CD8-positive, alpha-beta T cell (primary cell): ENCODE measurements at regions of chr2 and their contacts with region 1.

Region 1: GRCh38 chr2:207625018-207625907 is at the start of gene METTL21A:
- DNase-seq: peak; percentile 88 to 99 (median 95)
- ATAC-seq: peak; percentile 82
- H3K4me3 ChIP-seq: peak within 1 kb of the TSS; percentile 91 to 97
- H3K4me3 Mint-ChIP-seq: peak within 1 kb of the TSS; percentile 96
- H3K27ac ChIP-seq: peak within 1 kb of the TSS; percentile 95 to 97
- H3K27ac Mint-ChIP-seq: peak within 1 kb of the TSS; percentile 96
- H3K4me1 ChIP-seq: peaks cover 18% of the 10 kb centered on the region
- H3K4me1 Mint-ChIP-seq: peaks cover 43% of the 10 kb centered on the region
- H3K27me3 ChIP-seq: no peaks in the 10 kb centered on the region
- H3K27me3 Mint-ChIP-seq: no peaks in the 10 kb centered on the region
- CTCF ChIP-seq: peak; percentile 49
- total RNA-seq, gene METTL21A: 12.3 to 12.4 TPM

Region 2: DNA sequence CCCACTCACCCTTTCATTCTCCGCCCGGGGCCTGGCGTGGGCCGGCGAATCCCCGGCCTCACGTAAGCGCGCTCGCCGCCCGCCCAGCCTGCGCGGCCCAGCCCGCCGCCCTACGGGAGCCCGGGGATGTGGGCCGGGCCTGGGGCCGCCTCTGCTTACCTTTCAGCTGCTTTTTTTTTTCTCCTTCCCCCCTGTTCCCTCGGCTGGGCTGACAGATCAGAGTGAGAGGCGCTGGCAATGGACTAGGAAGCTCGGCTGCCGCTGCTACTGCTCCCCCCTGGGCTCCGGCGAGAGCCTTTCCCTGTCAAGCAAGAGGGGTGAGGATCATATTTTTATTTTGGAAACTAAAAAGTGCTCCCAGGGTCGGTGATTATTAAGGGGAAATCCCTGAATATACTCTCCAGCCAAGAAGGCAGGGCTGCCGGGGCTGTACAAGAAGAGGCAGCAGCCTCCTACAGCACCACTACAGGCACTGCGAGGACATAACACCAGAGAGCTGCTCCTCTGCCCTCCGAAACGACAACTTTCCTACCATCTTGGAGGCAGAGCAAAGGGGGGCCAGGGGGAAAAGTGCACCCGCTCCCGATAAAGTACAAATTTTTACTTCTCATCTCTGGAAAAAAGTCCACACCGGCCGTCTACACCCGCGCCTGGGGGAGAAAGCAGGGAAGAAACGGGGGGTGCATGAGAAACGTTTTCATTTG is 1539.4 kb before region 1 on chr2 and contains the start of gene INO80D:
- CTCF ChIA-PET with region 1: no interaction called
- POLR2A ChIA-PET with region 1: no interaction called
- intact Hi-C with region 1: loop called in 1 of 2 experiments (anchors 10 kb)
- DNase-seq: peak; percentile 63 to 93 (median 76)
- ATAC-seq: peak; percentile 91
- H3K4me3 ChIP-seq: peak within 1 kb of the TSS; percentile 85 to 88
- H3K4me3 Mint-ChIP-seq: peak within 1 kb of the TSS; percentile 100
- H3K27ac ChIP-seq: peak within 1 kb of the TSS; percentile 92 to 98
- H3K27ac Mint-ChIP-seq: peak within 1 kb of the TSS; percentile 100
- H3K4me1 ChIP-seq: peaks cover 32% of the 10 kb centered on the region
- H3K4me1 Mint-ChIP-seq: peaks cover 50% of the 10 kb centered on the region
- H3K27me3 ChIP-seq: no peaks in the 10 kb centered on the region
- H3K27me3 Mint-ChIP-seq: no peaks in the 10 kb centered on the region
- CTCF ChIP-seq: peak; percentile 66
- total RNA-seq, gene INO80D: 48.5 to 48.6 TPM

Region 3: DNA sequence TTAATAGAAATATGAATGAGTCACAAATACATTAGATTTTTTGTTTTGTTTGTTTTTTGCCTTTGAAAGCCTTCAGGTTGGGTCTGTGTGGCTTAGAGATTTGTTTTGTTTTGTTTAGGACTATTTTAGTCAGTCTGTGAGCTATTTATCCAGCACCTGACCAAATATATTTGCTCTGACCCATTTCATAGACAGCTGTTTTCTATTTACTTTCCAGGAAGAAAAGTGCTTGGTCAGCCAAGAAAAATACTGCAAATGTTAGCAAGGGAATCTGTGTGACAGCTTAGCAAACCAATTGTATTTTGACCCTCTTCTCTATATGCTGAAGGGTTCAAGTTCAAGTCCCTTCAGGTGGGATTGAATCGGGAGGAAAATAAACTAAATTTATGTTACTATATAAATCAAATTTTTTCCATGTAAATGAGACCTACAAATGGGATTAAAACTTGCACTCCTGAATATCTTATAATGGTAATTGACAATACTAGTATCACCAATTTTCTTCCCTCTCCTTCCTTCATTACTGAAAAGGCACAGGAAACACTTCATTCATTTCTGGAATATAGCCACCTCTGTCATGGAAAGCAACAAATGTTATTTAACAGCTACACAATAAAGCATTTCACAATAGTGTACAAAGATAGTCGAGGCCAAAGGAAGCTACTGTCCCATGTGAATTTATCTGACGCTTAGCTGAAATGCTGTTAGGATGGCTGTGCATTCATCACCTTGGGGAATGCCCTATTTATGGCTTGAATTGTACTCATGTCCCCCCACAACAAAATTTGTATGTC is 436.4 kb before region 1 on chr2:
- CTCF ChIA-PET with region 1: no interaction called
- POLR2A ChIA-PET with region 1: no interaction called
- intact Hi-C with region 1: no loop called
- DNase-seq: no peak
- ATAC-seq: no peak
- H3K4me3 ChIP-seq: no peak overlapping the region
- H3K4me3 Mint-ChIP-seq: no peak overlapping the region
- H3K27ac ChIP-seq: no peak overlapping the region
- H3K27ac Mint-ChIP-seq: no peak overlapping the region
- H3K4me1 ChIP-seq: no peaks in the 10 kb centered on the region
- H3K4me1 Mint-ChIP-seq: peaks cover 3% of the 10 kb centered on the region
- H3K27me3 ChIP-seq: no peaks in the 10 kb centered on the region
- H3K27me3 Mint-ChIP-seq: no peaks in the 10 kb centered on the region
- CTCF ChIP-seq: no peak

Region 4: GRCh38 chr2:207513551-207514257 is 111.6 kb before region 1 on chr2:
- CTCF ChIA-PET with region 1: interaction called, 6 read pairs
- POLR2A ChIA-PET with region 1: no interaction called
- intact Hi-C with region 1: loop called in 1 of 2 experiments (anchors 5 kb)
- DNase-seq: no peak
- ATAC-seq: no peak
- H3K4me3 ChIP-seq: no peak overlapping the region
- H3K4me3 Mint-ChIP-seq: no peak overlapping the region
- H3K27ac ChIP-seq: no peak overlapping the region
- H3K27ac Mint-ChIP-seq: no peak overlapping the region
- H3K4me1 ChIP-seq: no peaks in the 10 kb centered on the region
- H3K4me1 Mint-ChIP-seq: peaks cover 4% of the 10 kb centered on the region
- H3K27me3 ChIP-seq: no peaks in the 10 kb centered on the region
- H3K27me3 Mint-ChIP-seq: no peaks in the 10 kb centered on the region
- CTCF ChIP-seq: no peak

Region 5: GRCh38 chr2:207692206-207693065 is 67.2 kb after region 1 on chr2:
- CTCF ChIA-PET with region 1: interaction called, 10 read pairs
- POLR2A ChIA-PET with region 1: no interaction called
- intact Hi-C with region 1: loop called (anchors 5 kb)
- DNase-seq: peak in 8 of 9 experiments; percentile 27 to 71 (median 54)
- ATAC-seq: peak; percentile 52
- H3K4me3 ChIP-seq: no peak overlapping the region
- H3K4me3 Mint-ChIP-seq: no peak overlapping the region
- H3K27ac ChIP-seq: no peak overlapping the region
- H3K27ac Mint-ChIP-seq: no peak overlapping the region
- H3K4me1 ChIP-seq: no peaks in the 10 kb centered on the region
- H3K4me1 Mint-ChIP-seq: peaks cover 3% of the 10 kb centered on the region
- H3K27me3 ChIP-seq: no peaks in the 10 kb centered on the region
- H3K27me3 Mint-ChIP-seq: peaks cover 3% of the 10 kb centered on the region
- CTCF ChIP-seq: peak; percentile 54

Region 6: DNA sequence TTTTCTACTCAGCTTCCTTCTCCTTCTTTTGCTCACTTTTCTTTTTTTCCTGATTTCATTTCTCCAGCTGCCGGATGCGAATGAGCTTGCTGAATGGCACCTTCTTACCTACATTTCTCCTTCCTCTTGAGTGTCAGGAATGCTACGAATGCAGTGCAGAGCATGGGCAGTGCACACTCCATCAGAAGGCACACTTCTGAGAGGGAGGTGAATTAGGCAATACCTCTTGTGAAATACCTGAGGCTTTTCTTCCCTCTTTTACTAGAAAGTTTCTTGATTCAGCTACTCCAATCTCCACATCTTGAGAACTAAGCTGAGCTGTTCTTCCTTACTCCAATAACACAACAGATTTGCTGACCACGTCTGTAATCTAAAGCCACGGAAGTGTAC is 348.9 kb after region 1 on chr2:
- CTCF ChIA-PET with region 1: interaction called, 4 read pairs
- POLR2A ChIA-PET with region 1: no interaction called
- intact Hi-C with region 1: loop called (anchors 1 kb)
- DNase-seq: no peak
- ATAC-seq: no peak
- H3K4me3 ChIP-seq: no peak overlapping the region
- H3K4me3 Mint-ChIP-seq: no peak overlapping the region
- H3K27ac ChIP-seq: no peak overlapping the region
- H3K27ac Mint-ChIP-seq: no peak overlapping the region
- H3K4me1 ChIP-seq: peaks cover 4% of the 10 kb centered on the region
- H3K4me1 Mint-ChIP-seq: peaks cover 26% of the 10 kb centered on the region
- H3K27me3 ChIP-seq: no peaks in the 10 kb centered on the region
- H3K27me3 Mint-ChIP-seq: no peaks in the 10 kb centered on the region
- CTCF ChIP-seq: no peak

Region 7: GRCh38 chr2:208072250-208072892 is 447.1 kb after region 1 on chr2:
- CTCF ChIA-PET with region 1: interaction called, 3 read pairs
- POLR2A ChIA-PET with region 1: no interaction called
- intact Hi-C with region 1: loop called in 1 of 2 experiments (anchors 1 kb)
- DNase-seq: peak; percentile 6 to 67 (median 58)
- ATAC-seq: peak; percentile 54
- H3K4me3 ChIP-seq: no peak overlapping the region
- H3K4me3 Mint-ChIP-seq: no peak overlapping the region
- H3K27ac ChIP-seq: no peak overlapping the region
- H3K27ac Mint-ChIP-seq: no peak overlapping the region
- H3K4me1 ChIP-seq: no peaks in the 10 kb centered on the region
- H3K4me1 Mint-ChIP-seq: no peaks in the 10 kb centered on the region
- H3K27me3 ChIP-seq: no peaks in the 10 kb centered on the region
- H3K27me3 Mint-ChIP-seq: peaks cover 6% of the 10 kb centered on the region
- CTCF ChIP-seq: peak; percentile 83